Ascending aorta (tissue), 2 donors: ENCODE measurements at regions of chr13 and their contacts with region 1.

Region 1: GRCh38 chr13:32381539-32381938 is 46.4 kb downstream of the N4BP2L1 start:
- DNase-seq: no peak
- H3K4me3 ChIP-seq: no peak overlapping the region
- H3K27ac ChIP-seq: no peak overlapping the region
- H3K4me1 ChIP-seq: no peaks in the 10 kb centered on the region
- H3K27me3 ChIP-seq: no peaks in the 10 kb centered on the region
- CTCF ChIP-seq: peak; percentile 19 to 49 (median 23)

Region 2: DNA sequence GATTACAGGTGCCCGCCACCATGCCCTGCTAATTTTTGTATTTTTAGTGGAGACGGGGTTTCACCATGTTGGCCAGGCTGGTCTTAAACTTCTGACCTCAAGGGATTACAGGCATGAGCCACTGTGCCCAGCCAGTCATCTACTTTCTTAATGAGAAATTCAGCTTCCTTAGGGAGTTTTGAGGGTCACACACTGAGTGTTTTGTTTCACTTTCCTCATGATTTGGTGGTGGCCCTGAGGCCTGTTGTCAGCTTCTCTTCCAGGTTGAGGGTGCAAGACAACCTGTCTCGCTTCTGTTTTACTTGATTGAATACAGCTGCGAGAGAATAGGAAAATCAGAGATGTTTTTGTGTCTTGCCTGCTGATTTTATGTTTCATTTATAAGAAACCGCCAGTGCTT is 340.1 kb before region 1 on chr13:
- intact Hi-C with region 1: no loop called
- DNase-seq: no peak
- H3K4me3 ChIP-seq: no peak overlapping the region
- H3K27ac ChIP-seq: no peak overlapping the region
- H3K4me1 ChIP-seq: peaks cover 0 to 6% of the 10 kb centered on the region in 2 donors
- H3K27me3 ChIP-seq: no peaks in the 10 kb centered on the region
- CTCF ChIP-seq: no peak

Region 3: GRCh38 chr13:32581177-32581786 is 199.7 kb after region 1 on chr13:
- intact Hi-C with region 1: loop called (anchors 5 kb)
- DNase-seq: no peak
- H3K4me3 ChIP-seq: no peak overlapping the region
- H3K27ac ChIP-seq: no peak overlapping the region
- H3K4me1 ChIP-seq: peaks cover 0 to 5% of the 10 kb centered on the region in 2 donors
- H3K27me3 ChIP-seq: no peaks in the 10 kb centered on the region
- CTCF ChIP-seq: peak; percentile 36 to 60 (median 41)